Common myeloid progenitor, CD34-positive (primary cell): ENCODE measurements at regions of chr14 and their contacts with region 1.

Region 1: DNA sequence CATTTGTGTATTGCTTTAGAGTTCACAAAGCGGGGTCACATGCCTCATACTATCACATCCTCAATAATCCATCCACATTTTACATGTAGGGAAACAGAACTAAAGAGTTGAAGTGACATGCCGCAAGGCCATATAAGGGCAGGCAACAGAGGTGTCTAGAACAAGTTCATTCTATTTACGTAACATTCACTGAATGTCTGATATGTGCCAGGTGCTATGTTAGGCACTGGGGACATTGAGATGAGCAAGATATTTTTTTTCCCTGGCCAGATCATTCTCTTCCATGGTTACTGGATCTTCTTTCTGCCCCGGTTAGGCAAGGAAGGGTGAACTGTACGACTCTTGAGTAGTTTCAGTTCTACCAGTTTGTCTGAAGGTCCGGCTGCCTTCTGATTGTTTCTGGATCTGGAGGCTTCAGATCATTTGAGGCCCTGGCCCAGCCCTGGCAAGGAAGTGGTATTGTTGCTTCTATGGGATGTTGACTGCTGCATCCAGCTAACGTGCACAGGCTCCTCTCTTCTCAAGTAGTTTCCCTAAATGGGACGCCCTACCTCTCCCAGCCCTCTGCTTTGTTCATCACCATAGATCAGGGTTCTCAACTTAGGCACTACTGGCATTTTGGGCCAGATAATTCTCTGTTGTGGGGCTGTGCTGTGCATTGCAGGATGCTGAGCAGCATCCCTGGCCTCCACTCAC is 12.1 kb downstream of the GPATCH2L start:
- DNase-seq: no peak
- H3K4me3 ChIP-seq: no peak overlapping the region
- H3K27ac ChIP-seq: no peak overlapping the region
- H3K4me1 ChIP-seq: no peaks in the 10 kb centered on the region
- H3K27me3 ChIP-seq: no peaks in the 10 kb centered on the region

Region 2: DNA sequence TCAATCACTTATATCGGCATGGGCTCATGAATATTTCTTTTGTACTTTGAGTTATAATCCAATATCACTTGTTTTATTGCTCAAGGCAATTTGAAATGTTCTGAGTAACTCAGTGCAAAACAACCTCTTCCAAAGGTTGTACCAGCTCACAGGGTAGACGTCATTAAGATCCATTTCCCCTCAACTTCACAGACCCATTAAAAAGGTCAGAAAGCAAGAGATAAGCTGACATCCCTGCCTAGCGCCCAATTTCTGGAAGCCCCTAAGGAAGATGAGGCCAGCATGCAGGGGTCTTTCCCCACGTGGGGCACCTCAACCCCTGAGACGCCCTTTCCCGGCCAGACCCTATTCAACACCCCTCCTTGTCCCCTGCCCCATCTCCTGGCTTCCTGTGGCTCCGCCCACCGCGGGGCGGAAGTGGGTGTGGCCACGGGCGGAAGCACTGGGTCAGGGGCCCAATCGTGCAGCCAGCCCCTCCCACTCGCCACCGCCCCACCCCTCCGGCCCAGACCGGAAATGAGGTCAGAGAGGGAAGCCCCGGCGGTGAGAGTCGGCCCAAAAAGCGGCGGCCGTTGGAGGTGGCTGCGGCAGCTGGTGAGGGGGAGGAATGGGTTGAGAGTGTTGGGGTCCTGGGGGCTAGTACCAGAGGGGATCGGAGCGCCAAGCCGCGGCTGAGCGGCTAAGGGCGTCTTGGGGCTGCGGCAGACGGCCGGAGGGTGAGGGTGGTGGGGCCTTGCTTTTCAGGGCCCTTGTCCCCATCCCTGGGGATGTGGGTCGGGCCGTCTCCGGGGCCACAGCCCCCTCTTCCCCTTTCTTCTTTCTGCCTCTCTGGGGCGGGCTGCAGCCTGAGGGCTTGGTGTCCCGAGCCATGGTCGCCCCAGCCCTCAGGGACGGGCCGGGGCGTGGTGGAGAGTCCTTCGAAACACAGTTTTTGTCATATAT is 12.1 kb before region 1 on chr14 and contains the start of gene GPATCH2L:
- CTCF ChIA-PET with region 1: interaction called, 3 read pairs
- POLR2A ChIA-PET with region 1: interaction called, 11 read pairs
- DNase-seq: peak; percentile 91 to 97 (median 95)
- H3K4me3 ChIP-seq: peak within 1 kb of the TSS; percentile 67 to 95 (median 90)
- H3K27ac ChIP-seq: peak within 1 kb of the TSS; percentile 99
- H3K4me1 ChIP-seq: peaks cover 21 to 43% (median 35%) of the 10 kb centered on the region in 4 experiments
- H3K27me3 ChIP-seq: peaks cover 0 to 26% (median 3%) of the 10 kb centered on the region in 5 experiments